ENCODE measurements at regions of chr16 and their contacts with region 1.

Region 1: GRCh38 chr16:4087099-4087885 is 28.9 kb downstream of the ADCY9 start:
- DNase-seq: no peak
- ATAC-seq: peak; percentile 60
- H3K4me3 ChIP-seq: no peak overlapping the region
- H3K27ac ChIP-seq: no peak overlapping the region
- H3K4me1 ChIP-seq: peaks cover 19% of the 10 kb centered on the region
- H3K27me3 ChIP-seq: no peaks in the 10 kb centered on the region
- CTCF ChIP-seq: no peak
- POLR2A ChIP-seq: no peak
- RAD21 ChIP-seq: no peak

Region 2: DNA sequence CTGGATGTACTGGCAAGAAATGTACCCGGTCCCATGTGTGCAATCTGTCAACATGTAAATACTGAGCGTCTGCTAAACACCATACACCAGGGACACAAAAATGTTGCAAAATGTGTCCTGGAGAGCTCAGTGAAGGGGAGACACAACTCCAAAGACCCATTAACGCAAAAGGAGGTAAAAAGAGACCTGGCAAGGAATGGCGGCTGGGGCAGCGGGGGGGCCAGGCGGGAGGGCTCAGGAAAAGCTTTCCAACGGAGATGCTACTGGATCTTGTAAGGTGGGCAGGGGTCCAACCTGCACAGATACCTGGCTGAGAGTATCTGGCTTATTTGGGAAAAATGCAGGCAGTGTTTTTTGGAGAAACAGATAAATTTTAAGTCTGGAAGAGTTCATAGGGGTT is 11.8 kb before region 1 on chr16:
- CTCF ChIA-PET with region 1: no interaction called
- POLR2A ChIA-PET with region 1: interaction called, 25 read pairs
- dilution Hi-C with region 1: no loop called
- in situ Hi-C with region 1: no loop called
- intact Hi-C with region 1: no loop called
- DNase-seq: no peak
- ATAC-seq: no peak
- H3K4me3 ChIP-seq: no peak overlapping the region
- H3K27ac ChIP-seq: no peak overlapping the region
- H3K4me1 ChIP-seq: no peaks in the 10 kb centered on the region; the same call in 1 of the 2 replicates
- H3K27me3 ChIP-seq: no peaks in the 10 kb centered on the region
- CTCF ChIP-seq: no peak
- POLR2A ChIP-seq: no peak
- RAD21 ChIP-seq: no peak

Measured in IMR-90 (cell line).